Tibial artery (tissue), 4 donors: ENCODE measurements at regions of chr17 and their contacts with region 1.

Region 1: GRCh38 chr17:46002311-46002972 is 3.4 kb downstream of the STH start:
- DNase-seq: peak; percentile 69 to 78
- H3K4me3 ChIP-seq: no peak overlapping the region
- H3K27ac ChIP-seq: no peak overlapping the region
- H3K4me1 ChIP-seq: peaks cover 0 to 21% (median 7%) of the 10 kb centered on the region in 4 donors
- H3K27me3 ChIP-seq: no peaks in the 10 kb centered on the region
- CTCF ChIP-seq: peak; percentile 94 to 97

Region 2: DNA sequence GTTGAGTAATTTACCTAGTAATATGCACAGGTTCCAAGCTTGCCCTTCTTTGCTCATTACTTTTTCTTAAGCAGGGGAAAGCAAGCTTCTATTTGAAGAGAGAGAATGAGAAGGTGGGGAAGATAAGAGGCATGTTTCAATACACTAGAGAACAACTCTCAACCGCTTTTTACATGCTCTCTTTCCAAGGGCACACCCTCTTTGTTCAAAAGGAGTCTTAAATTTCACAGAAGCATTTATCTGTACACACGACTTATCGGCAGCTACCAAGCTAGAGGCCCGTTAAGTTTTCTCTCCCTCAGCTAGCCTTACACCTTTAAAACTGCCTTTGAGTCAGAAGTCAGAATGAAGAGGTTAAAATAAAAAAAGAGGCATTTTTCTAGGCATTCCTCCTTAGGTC is 76.2 kb after region 1 on chr17:
- intact Hi-C with region 1: no loop called
- DNase-seq: no peak
- H3K4me3 ChIP-seq: no peak overlapping the region
- H3K27ac ChIP-seq: no peak overlapping the region
- H3K4me1 ChIP-seq: peaks cover 0 to 25% (median 0%) of the 10 kb centered on the region in 4 donors
- H3K27me3 ChIP-seq: no peaks in the 10 kb centered on the region
- CTCF ChIP-seq: no peak

Region 3: DNA sequence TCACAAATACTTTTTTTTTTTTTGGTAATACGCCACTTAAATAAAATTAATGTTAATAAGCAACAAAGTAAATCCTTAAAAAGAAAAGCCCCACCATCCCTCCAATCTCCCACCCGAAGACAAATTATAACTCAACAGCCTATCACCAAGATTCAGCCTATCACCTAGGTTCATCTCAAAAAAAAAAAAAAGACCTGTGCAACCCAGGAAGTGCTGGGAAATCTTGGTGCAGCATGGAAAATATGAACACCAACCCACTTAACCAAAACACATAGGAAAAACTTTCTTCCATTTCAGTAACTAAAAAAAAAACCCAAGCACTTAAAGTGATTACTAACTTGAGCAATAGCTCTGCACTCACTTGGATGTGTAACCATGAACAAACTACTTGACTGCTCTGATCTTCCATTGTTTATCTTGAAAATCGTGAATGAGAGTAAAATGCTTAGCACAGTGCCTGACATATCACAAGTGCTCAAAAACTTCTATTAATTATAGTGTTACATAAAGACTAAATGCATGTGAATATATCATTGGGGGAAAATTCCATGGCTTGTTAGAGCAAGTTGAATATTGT is 87.0 kb after region 1 on chr17:
- intact Hi-C with region 1: no loop called
- DNase-seq: no peak
- H3K4me3 ChIP-seq: no peak overlapping the region
- H3K27ac ChIP-seq: no peak overlapping the region
- H3K4me1 ChIP-seq: peaks cover 0 to 5% (median 0%) of the 10 kb centered on the region in 4 donors
- H3K27me3 ChIP-seq: no peaks in the 10 kb centered on the region
- CTCF ChIP-seq: no peak

Region 4: GRCh38 chr17:46212634-46213435 is 210.4 kb after region 1 on chr17:
- intact Hi-C with region 1: loop called (anchors 5 kb)
- DNase-seq: peak; percentile 70 to 80
- H3K4me3 ChIP-seq: no peak overlapping the region
- H3K27ac ChIP-seq: peak overlapping the region; percentile 33 to 69
- H3K4me1 ChIP-seq: peaks cover 0 to 37% (median 5%) of the 10 kb centered on the region in 4 donors
- H3K27me3 ChIP-seq: no peaks in the 10 kb centered on the region
- CTCF ChIP-seq: peak; percentile 71 to 92